Left cardiac atrium (tissue), 4 donors: ENCODE measurements at regions of chr3 and their contacts with region 1.

Region 1: DNA sequence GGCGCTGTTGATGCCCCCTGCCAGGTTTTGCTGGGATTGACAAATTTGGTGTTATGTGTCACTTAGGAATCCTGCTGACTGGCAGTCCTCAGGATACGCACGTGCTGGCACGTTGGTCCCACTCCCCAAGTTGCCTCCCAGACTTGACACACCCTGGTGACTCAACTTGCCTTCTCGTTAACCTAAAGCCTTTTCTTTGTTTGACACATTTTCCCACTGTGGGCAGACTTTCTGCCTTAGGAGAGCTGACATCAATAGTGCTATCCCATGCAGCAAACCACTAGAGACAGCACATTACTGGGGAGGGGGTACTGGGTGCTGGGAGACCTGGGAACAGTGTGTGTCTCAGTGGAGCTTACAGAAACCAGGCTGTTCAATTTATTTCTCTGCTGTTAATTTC is 104.3 kb downstream of the OXNAD1 start:
- DNase-seq: no peak
- ATAC-seq: no peak

Region 2: DNA sequence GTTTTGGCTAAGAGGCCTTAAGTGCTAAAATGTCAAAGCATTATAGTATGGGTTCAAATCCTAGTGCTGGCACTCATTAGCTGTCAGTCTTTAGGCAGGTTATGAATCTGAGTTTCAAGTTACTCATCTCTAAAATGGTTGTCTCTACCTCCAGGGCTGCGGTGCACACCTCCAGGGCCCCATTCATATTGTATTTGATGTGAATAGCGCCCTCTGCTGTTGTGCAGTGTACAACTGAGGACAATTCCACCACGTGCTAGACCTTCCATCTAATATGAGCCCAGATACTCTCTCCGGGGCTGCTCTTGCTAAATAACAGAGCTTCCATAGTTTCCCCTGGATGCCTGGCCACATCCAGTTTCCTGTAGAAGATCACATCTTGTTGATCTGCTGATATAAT is 50.0 kb before region 1 on chr3:
- intact Hi-C with region 1: loop called in 1 of 2 experiments (anchors 5 kb)
- DNase-seq: no peak
- ATAC-seq: no peak

Region 3: GRCh38 chr3:16570113-16570512 is 200.8 kb after region 1 on chr3:
- intact Hi-C with region 1: no loop called
- DNase-seq: no peak
- ATAC-seq: no peak